ENCODE measurements at regions of chr9 and their contacts with region 1.

Region 1: GRCh38 chr9:132575005-132575609 is 7.3 kb upstream of the BARHL1 start:
- DNase-seq: peak in 1 of 2 experiments; percentile 90
- H3K4me3 ChIP-seq: no peak overlapping the region
- H3K27ac ChIP-seq: no peak overlapping the region
- H3K4me1 ChIP-seq: peaks cover 0 to 9% (median 7%) of the 10 kb centered on the region in 4 experiments; a peak in 5 of 7 replicates
- H3K27me3 ChIP-seq: peaks cover 29 to 50% (median 49%) of the 10 kb centered on the region in 4 experiments
- CTCF ChIP-seq: peak; percentile 89 to 98 (median 91)
- EP300 ChIP-seq: no peak
- POLR2A ChIP-seq: no peak
- RAD21 ChIP-seq: peak; percentile 99

Region 2: GRCh38 chr9:132560616-132561202 is 14.4 kb before region 1 on chr9:
- CTCF ChIA-PET with region 1: interaction called, 14 read pairs
- POLR2A ChIA-PET with region 1: no interaction called
- DNase-seq: no peak
- H3K4me3 ChIP-seq: no peak overlapping the region
- H3K27ac ChIP-seq: no peak overlapping the region
- H3K4me1 ChIP-seq: peaks cover 0 to 3% (median 0%) of the 10 kb centered on the region in 4 experiments; a peak in 1 of 7 replicates
- H3K27me3 ChIP-seq: no peaks in the 10 kb centered on the region
- CTCF ChIP-seq: no peak
- EP300 ChIP-seq: no peak
- POLR2A ChIP-seq: no peak
- RAD21 ChIP-seq: no peak

Measured in H1 (cell line).